ENCODE measurements at regions of chr2 and their contacts with region 1.

Region 1: DNA sequence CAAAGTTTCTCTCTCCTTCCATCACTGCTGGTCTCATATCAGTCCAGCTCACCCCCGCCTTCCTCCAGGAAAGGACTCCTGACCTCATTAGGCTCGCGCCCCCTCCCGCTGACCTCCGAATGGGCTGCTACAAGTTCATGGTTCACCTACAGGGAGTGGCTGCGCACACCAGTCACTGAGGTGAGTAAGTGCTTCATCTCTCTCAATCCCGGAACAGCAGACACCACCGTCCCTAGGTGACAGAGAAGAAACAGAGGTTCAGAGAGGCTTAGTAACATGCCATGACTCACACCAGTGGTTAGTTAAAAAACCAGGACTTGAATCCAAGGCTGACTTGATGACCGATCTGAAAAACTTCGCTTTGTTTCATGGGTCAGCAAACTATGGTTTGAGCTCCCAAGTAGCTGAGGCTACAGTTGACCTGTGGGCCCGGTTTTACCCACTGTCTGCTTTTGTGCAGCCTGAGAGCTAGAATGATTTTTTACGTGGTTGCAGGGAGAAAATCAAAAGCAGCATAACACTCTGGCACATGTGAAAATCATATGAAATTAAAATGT is 42.0 kb downstream of the ZFP36L2 start:
- DNase-seq: no peak

Region 2: DNA sequence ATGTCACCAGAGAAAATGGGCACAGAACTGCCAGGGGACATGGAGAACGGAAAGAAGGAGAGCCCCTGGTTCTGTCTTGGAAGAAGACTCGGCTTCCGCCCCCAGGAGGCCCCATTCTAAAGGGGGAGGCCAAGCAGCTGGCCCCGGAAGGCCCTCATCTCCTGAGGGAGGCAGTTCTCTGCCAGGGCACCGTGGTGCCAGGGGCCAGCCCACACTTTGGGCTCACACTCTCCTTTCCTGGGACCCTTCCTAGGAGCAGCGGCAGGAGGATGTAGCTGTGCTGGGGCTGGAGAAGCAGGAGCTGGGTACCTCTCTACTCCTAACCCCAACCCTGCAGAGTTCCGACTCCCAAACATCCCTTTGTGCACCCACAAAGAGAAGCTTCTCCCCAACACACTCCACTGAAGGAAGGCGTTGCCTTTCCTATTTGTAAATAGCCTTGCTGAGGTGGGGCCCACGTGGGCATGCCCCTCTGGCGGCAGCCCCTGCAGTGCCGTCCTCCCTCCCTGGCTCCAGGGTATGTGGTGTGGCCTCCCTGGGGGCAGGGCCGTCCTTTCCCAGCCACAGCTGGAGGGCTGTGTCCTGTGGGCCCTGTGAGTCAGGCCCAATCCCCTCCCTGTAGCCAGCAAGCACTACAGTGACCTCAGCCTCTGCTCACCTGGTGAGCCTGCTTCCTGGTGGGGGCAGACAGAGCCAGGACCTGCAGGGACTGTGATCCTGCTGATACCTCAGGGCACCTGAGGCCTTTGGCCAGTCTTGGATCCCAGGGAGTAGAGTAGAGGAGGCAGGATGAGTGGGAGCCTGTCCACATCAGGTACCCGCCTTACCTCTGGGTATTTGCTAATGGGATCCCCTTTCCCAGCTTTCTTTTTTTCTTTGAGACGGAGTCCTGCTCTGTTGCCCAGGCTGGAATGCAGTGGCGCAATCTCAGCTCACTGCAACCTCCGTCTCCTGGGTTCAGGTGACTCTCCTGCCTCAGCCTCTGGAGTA is 15.4 kb after region 1 on chr2:
- intact Hi-C with region 1: loop called in 1 of 2 experiments (anchors 1 kb)
- DNase-seq: no peak

Measured in posterior vena cava (tissue), 2 donors.